WTC11 (cell line): ENCODE measurements at regions of chr11 and their contacts with region 1.

Region 1: DNA sequence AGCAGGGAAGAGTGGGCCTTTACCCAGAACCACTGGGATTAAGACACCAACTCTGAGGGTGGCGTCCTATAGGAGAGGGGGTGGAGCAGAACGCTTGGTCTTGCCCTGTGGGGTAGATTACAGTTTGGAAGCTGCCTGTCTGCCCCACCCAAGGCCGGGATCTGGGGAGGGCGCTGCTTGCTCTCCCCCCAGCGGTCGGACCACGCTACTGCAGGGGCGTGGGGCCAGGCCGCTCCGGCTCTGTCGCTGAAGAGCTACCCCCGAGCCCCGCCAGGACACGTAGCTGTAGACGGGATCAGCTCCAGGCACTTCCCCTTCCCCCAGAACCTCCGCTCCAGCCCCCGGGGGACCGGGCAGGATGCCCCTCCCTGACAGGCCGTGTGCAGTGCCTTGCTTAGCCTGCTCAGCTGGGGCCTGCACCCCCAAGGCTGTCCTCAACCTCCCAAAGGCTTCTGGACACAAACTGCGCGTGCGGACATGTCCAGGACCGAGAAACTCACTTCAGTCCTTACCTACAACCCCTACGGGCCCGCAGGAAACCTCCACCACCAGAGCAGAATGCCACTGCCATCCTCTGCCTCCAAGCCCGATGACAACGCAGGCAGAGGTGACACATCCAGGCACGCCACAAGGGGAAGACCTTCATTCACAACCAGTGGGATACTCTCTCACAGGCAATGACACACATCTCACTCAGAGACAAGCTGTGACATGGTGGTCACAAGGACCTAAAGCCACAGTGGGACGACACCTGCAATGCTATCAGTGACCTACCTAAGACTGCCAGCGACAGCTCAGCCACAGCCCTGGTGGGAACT is 3.6 kb downstream of the AHNAK start:
- DNase-seq: peak; percentile 90
- ATAC-seq: peak; percentile 51
- H3K4me3 Mint-ChIP-seq: peak overlapping the region; percentile 52
- H3K27ac Mint-ChIP-seq: no peak overlapping the region
- H3K4me1 Mint-ChIP-seq: peaks cover 46% of the 10 kb centered on the region
- H3K27me3 Mint-ChIP-seq: peaks cover 65% of the 10 kb centered on the region
- CTCF ChIP-seq: peak; percentile 99

Region 2: GRCh38 chr11:62394825-62395538 is 148.0 kb before region 1 on chr11:
- CTCF ChIA-PET with region 1: interaction called, 279 read pairs
- POLR2A ChIA-PET with region 1: interaction called, 6 read pairs
- DNase-seq: peak; percentile 78
- ATAC-seq: peak; percentile 71
- H3K4me3 Mint-ChIP-seq: peak overlapping the region; percentile 59
- H3K27ac Mint-ChIP-seq: no peak overlapping the region; the same call in 1 of the 2 replicates
- H3K4me1 Mint-ChIP-seq: peaks cover 22% of the 10 kb centered on the region
- H3K27me3 Mint-ChIP-seq: no peaks in the 10 kb centered on the region
- CTCF ChIP-seq: peak; percentile 61

Region 3: GRCh38 chr11:62411524-62411923 is 131.4 kb before region 1 on chr11:
- CTCF ChIA-PET with region 1: interaction called, 22 read pairs
- POLR2A ChIA-PET with region 1: no interaction called
- DNase-seq: no peak
- ATAC-seq: no peak
- H3K4me3 Mint-ChIP-seq: no peak overlapping the region
- H3K27ac Mint-ChIP-seq: no peak overlapping the region
- H3K4me1 Mint-ChIP-seq: no peaks in the 10 kb centered on the region
- H3K27me3 Mint-ChIP-seq: no peaks in the 10 kb centered on the region; the same call in 1 of the 2 replicates
- CTCF ChIP-seq: no peak

Region 4: GRCh38 chr11:62449451-62449851 is 93.5 kb before region 1 on chr11:
- CTCF ChIA-PET with region 1: interaction called, 85 read pairs
- POLR2A ChIA-PET with region 1: no interaction called
- DNase-seq: no peak
- ATAC-seq: no peak
- H3K4me3 Mint-ChIP-seq: no peak overlapping the region
- H3K27ac Mint-ChIP-seq: peak overlapping the region; percentile 6; the same call in 1 of the 2 replicates
- H3K4me1 Mint-ChIP-seq: peaks cover 10% of the 10 kb centered on the region
- H3K27me3 Mint-ChIP-seq: no peaks in the 10 kb centered on the region
- CTCF ChIP-seq: no peak

Region 5: GRCh38 chr11:62479631-62480201 is 63.2 kb before region 1 on chr11:
- CTCF ChIA-PET with region 1: interaction called, 39 read pairs
- POLR2A ChIA-PET with region 1: interaction called, 3 read pairs
- DNase-seq: no peak
- ATAC-seq: no peak
- H3K4me3 Mint-ChIP-seq: no peak overlapping the region
- H3K27ac Mint-ChIP-seq: no peak overlapping the region
- H3K4me1 Mint-ChIP-seq: 0 out of 2 replicates have a peak, but pooled peaks cover 3% of the 10 kb centered on the region
- H3K27me3 Mint-ChIP-seq: no peaks in the 10 kb centered on the region; the same call in 1 of the 2 replicates
- CTCF ChIP-seq: no peak

Region 6: DNA sequence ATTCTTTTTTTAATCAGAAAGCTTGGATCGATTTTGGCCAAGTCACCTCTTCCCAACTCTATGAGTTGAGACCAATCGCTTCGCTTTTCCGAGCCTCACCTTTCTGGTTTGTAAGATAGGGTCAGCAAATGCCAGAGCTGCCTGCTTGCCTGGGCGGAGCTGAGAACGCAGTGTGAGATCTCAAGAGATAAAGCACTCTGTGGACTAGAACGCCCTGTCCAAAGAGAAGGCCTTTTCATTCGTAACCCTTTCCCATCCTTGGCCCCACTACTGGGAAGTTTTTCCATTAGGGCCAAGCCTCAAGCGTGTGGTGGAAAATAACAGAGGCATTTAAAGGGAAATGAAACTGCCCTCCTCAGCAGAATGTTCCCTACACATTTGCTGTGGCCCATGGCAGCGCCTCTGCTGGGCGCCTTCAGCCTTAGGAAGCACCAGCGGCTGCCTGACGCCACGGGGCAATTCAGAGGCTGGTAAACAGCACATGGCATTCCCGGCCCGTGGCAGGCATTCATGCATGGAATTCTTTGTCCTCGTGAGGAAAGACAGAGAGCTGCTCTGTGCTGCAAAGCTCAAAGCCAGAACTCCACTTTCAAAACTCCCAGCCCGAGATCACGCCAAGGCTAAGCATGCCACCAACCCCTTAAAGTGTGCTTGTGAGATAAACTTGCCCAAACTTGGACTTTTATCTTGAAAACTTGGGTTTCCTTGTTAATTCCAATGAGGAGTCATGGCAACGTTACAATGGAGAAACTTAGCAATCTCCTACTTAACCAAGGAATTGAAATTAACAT is 34.5 kb before region 1 on chr11:
- CTCF ChIA-PET with region 1: interaction called, 177 read pairs
- POLR2A ChIA-PET with region 1: interaction called, 7 read pairs
- DNase-seq: peak; percentile 75
- ATAC-seq: peak; percentile 75
- H3K4me3 Mint-ChIP-seq: peak overlapping the region; percentile 32
- H3K27ac Mint-ChIP-seq: peak overlapping the region; percentile 71
- H3K4me1 Mint-ChIP-seq: peaks cover 37% of the 10 kb centered on the region
- H3K27me3 Mint-ChIP-seq: peaks cover 42% of the 10 kb centered on the region
- CTCF ChIP-seq: no peak

Region 7: GRCh38 chr11:62573592-62574362 is 30.8 kb after region 1 on chr11 and contains the start of gene EEF1G:
- CTCF ChIA-PET with region 1: interaction called, 26 read pairs
- POLR2A ChIA-PET with region 1: interaction called, 7 read pairs
- DNase-seq: peak; percentile 98
- ATAC-seq: peak; percentile 97
- H3K4me3 Mint-ChIP-seq: peak within 1 kb of the TSS; percentile 99
- H3K27ac Mint-ChIP-seq: peak within 1 kb of the TSS; percentile 96
- H3K4me1 Mint-ChIP-seq: peaks cover 37% of the 10 kb centered on the region
- H3K27me3 Mint-ChIP-seq: no peaks in the 10 kb centered on the region
- CTCF ChIP-seq: no peak
- total RNA-seq, gene EEF1G: 1,667 to 1,857 TPM (median 1,846 TPM) in 3 replicates